Esophagus muscularis mucosa (tissue), 4 donors: ENCODE measurements at regions of chr3 and their contacts with region 1.

Region 1: DNA sequence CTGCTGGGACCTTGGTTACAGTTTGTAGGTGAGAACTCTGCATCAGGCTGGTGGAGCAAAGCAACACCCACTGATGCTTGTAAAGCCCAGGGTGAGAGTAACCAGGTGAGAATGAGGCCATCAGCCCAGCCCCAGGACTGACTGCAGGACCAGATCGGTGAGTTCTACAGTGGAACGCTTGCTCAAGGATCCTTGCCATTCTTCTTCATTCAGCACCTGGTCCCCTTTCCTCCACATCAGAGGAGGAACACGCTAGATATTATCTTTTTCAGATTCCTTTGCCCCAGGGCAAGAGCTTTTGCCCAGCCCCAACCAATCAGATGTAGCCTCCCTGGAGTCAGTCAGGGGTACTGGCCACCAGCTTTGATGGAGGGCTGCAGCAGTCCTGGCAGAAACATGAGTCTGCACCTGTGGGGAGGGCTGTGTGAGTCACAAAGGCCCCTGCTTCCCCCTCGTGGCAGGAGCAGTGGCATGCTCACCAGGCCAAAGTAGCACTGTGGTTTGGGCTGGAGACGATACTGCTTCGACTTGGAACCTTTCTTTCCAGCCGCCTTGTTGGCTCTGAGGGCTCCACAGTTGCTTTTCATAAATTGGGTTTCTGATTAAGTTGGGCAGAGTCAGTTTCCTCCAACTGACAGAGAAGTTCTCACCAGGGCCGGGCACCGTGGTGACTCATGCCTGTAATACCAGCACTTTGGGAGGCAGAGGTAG is 3.5 kb upstream of the SHISA5 start:
- DNase-seq: no peak
- H3K4me3 ChIP-seq: no peak overlapping the region
- H3K27ac ChIP-seq: no peak overlapping the region
- H3K4me1 ChIP-seq: peaks cover 25 to 32% (median 27%) of the 10 kb centered on the region in 4 donors
- H3K27me3 ChIP-seq: peaks cover 0 to 3% (median 0%) of the 10 kb centered on the region in 4 donors
- CTCF ChIP-seq: peak; percentile 32 to 51 (median 49)
- EP300 ChIP-seq: no peak
- POLR2A ChIP-seq: no peak

Region 2: GRCh38 chr3:48465531-48466378 is 41.8 kb before region 1 on chr3:
- intact Hi-C with region 1: loop called (anchors 1 kb)
- DNase-seq: peak; percentile 99
- H3K4me3 ChIP-seq: peak overlapping the region; percentile 56 to 71 (median 58)
- H3K27ac ChIP-seq: peak overlapping the region; percentile 96 to 100 (median 98)
- H3K4me1 ChIP-seq: peaks cover 62 to 65% (median 63%) of the 10 kb centered on the region in 4 donors
- H3K27me3 ChIP-seq: no peaks in the 10 kb centered on the region
- CTCF ChIP-seq: peak; percentile 81 to 91 (median 90)
- EP300 ChIP-seq: no peak
- POLR2A ChIP-seq: peak; percentile 66